BJ (cell line): ENCODE measurements at regions of chr16 and their contacts with region 1.

Region 1: DNA sequence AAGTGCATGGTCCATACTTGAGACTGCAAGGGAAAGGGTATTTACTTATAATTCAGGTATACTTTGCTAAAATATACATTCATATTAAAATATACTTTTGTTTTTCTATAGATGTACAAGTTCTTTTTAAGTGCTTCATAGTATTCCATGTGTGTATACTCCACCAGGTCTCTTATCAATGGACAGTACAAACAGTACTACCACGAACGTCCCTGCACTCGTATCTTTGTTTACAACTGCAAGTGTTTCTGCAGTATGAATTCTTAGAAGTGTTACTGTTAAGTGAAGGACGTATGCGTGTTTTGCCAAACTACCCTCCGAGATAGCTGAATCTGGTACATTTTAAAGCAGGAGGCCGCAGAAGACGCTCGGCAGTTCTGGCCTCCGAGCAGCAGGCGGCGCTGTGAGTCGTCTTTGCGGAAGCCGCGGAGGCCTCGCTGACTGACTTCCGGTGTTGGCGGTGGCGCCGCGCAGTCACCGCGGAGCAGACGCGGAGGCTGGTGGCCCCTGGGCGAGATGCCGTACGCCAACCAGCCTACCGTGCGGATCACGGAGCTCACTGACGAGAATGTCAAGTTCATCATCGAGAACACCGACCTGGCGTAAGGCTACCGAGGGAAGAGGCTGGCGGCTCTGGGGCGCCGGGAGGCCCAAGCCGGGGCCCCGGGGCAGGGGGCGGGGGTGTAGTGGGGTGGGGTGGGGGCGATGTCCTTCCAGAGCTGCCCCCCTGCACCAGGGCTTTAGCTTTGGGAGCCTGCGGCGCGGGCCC is at the start of gene POLR2C:
- DNase-seq: no peak
- H3K4me3 ChIP-seq: peak within 1 kb of the TSS; percentile 93
- H3K27me3 ChIP-seq: no peaks in the 10 kb centered on the region
- CTCF ChIP-seq: peak; percentile 99
- polyA plus RNA-seq, gene POLR2C: 127 and 176 TPM in 2 replicates

Region 2: DNA sequence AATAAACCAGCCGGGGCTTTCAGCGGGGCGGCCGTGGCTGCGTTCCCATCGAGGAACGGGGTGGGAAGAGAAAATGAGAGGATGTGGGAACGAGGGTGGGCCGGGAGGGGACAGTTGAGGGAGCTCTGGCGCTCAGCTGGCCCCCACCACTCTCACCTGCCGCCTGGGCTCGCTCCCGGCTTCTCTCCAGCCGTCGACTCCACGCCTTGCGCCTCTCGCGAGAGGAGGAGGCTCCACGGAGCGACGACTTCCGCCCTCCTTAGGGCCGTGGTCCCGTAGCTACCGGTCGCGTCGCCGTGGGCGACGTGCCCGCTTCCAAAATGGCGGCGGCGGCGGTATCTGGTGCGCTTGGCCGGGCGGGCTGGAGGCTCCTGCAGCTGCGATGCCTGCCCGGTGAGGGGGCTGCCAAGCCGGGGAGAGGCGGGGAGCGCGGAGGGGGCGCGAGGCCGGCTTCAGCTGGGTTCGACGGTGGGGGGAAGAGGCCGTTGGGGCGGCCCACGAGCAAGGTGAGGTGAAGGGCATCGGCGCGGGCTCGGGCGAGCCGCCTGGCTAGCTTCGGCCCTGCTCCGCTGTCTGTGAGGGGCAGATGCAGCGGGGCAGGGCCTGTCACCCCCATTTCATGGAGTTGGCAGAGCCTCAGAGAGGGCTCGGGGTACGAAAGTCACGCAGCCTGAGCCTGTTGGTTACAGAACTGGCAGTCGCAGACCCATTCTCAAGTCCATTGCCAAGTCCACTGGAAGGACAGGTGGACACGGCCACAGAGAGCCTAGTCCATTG is 15.0 kb before region 1 on chr16 and contains the starts of genes CIAPIN1 and COQ9:
- CTCF ChIA-PET with region 1: interaction called, 12 read pairs
- POLR2A ChIA-PET with region 1: no interaction called
- DNase-seq: peak; percentile 59
- H3K4me3 ChIP-seq: peak within 1 kb of the TSS; percentile 97
- H3K27me3 ChIP-seq: no peaks in the 10 kb centered on the region
- CTCF ChIP-seq: no peak
- polyA plus RNA-seq, gene CIAPIN1: 51.6 and 55.3 TPM in 2 replicates
- polyA plus RNA-seq, gene COQ9: 62.7 and 69.5 TPM in 2 replicates

Region 3: DNA sequence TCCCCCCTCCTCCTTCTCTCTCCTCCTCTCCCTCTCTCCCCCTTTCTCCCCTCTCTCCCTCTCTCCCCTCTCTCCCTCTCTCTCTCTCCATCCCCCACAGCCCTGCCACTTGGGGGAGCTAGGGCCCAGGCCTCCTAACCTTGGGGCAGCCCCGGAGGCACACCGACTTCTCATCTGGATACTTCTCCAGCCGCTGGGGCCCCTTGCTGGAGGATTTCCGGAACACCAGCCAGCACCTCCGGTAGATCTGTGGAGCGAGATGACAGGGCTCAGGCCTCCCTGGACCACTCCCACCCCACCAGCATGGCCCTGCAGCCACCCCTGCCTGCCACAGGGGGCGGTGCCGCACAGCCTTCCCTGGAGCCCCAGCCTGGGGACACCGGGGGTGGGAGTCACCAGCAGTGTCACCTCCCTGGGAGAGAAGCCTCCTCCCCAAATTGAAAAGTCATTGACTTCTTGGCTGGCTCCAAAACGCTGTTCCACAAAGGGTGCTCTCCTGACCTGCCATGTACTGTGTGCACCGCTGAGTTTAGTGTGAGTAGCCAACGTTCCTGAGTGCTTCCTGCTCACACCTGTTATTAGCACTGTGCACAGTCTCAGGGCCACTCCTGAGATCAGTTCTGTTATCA is 13.4 kb after region 1 on chr16:
- CTCF ChIA-PET with region 1: interaction called, 24 read pairs
- POLR2A ChIA-PET with region 1: no interaction called
- DNase-seq: no peak
- H3K4me3 ChIP-seq: no peak overlapping the region
- H3K27me3 ChIP-seq: no peaks in the 10 kb centered on the region
- CTCF ChIP-seq: peak; percentile 70

Region 4: GRCh38 chr16:57485916-57486857 is 23.8 kb after region 1 on chr16 and contains the start of gene DOK4:
- CTCF ChIA-PET with region 1: interaction called, 24 read pairs
- POLR2A ChIA-PET with region 1: interaction called, 5 read pairs
- DNase-seq: no peak
- H3K4me3 ChIP-seq: peak within 1 kb of the TSS; percentile 83
- H3K27me3 ChIP-seq: no peaks in the 10 kb centered on the region
- CTCF ChIP-seq: no peak
- polyA plus RNA-seq, gene DOK4: 28.3 and 40.0 TPM in 2 replicates